Heart right ventricle (tissue), 16 donors: ENCODE measurements at regions of chr5 and their contacts with region 1.

Region 1: DNA sequence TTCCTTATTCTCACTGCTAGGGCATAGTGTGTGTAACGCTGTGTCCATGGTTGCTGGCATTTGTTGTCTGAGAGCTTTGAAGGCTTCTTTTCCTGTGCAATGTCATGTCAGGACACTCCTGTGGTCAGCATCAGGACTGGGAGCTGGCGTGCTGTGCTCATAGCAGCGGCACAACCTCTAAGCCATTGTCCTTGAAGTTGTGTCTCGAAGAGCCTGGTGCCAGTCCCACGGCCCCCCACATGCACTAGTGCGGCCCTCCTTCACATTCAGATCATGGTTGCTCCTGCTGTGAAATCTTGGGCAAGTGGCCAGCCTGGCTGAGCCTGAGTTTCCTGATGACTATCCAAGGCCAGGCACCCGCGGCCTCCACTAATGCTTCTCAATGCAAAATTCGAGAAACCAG is 32.4 kb downstream of the PDZD2 start:
- DNase-seq: peak; percentile 36 to 53
- ATAC-seq: peak; percentile 74 to 93 (median 86)
- H3K4me3 ChIP-seq: no peak overlapping the region
- H3K27ac ChIP-seq: peak overlapping the region in 9 of 10 donors; percentile 36 to 72 (median 53)
- H3K4me1 ChIP-seq: peaks cover 6 to 51% (median 38%) of the 10 kb centered on the region in 9 donors
- H3K27me3 ChIP-seq: no peaks in the 10 kb centered on the region
- CTCF ChIP-seq: no peak

Region 2: GRCh38 chr5:31741496-31741895 is 70.2 kb after region 1 on chr5:
- intact Hi-C with region 1: loop called in 1 of 10 experiments (anchors 5 kb)
- DNase-seq: peak; percentile 38 to 39
- ATAC-seq: peak; percentile 52 to 92 (median 80)
- H3K4me3 ChIP-seq: no peak overlapping the region
- H3K27ac ChIP-seq: peak overlapping the region in 7 of 10 donors; percentile 17 to 67 (median 32)
- H3K4me1 ChIP-seq: peaks cover 3 to 57% (median 31%) of the 10 kb centered on the region in 9 donors
- H3K27me3 ChIP-seq: no peaks in the 10 kb centered on the region
- CTCF ChIP-seq: no peak